ENCODE measurements at regions of chr15 and their contacts with region 1.

Region 1: DNA sequence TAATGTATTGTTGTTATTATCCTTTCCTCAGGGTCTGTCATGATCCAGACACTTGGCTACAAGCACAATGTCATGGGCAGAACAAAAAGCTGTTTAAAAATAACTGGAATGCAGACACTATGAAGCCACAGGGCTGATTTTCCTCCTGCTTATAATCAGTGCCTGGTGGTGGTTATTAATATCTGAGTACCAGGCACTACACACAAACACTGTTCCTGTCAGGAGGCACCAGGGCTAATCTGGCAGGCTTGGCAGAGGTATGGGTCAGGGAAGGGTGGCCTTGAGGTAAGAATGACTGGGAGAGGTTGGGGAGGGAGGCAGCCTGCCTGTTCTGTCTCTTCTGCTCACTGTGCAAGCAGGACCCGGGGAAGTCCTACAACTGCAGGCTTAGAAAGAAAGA is 67.2 kb downstream of the WDR76 start:
- DNase-seq: peak; percentile 41 to 82
- ATAC-seq: peak; percentile 86 to 98 (median 95)
- H3K4me3 ChIP-seq: peak overlapping the region in 2 of 10 donors; percentile 24 to 25
- H3K27ac ChIP-seq: peak overlapping the region; percentile 48 to 93 (median 88)
- H3K4me1 ChIP-seq: peaks cover 3 to 71% (median 16%) of the 10 kb centered on the region in 9 donors
- H3K27me3 ChIP-seq: no peaks in the 10 kb centered on the region
- CTCF ChIP-seq: no peak

Region 2: GRCh38 chr15:43879386-43880355 is 14.3 kb before region 1 on chr15:
- intact Hi-C with region 1: loop called in 2 of 10 experiments (anchors 1 to 2 kb)
- DNase-seq: peak; percentile 47 to 62
- ATAC-seq: peak; percentile 73 to 89 (median 82)
- H3K4me3 ChIP-seq: peak overlapping the region; percentile 33 to 68 (median 52)
- H3K27ac ChIP-seq: peak overlapping the region; percentile 68 to 97 (median 94)
- H3K4me1 ChIP-seq: peaks cover 0 to 51% (median 9%) of the 10 kb centered on the region in 9 donors
- H3K27me3 ChIP-seq: no peaks in the 10 kb centered on the region
- CTCF ChIP-seq: no peak